ENCODE measurements at regions of chr13 and their contacts with region 1.

Region 1: GRCh38 chr13:95614641-95615245 is 29.8 kb downstream of the DZIP1 start:
- DNase-seq: no peak
- CTCF ChIP-seq: no peak

Region 2: DNA sequence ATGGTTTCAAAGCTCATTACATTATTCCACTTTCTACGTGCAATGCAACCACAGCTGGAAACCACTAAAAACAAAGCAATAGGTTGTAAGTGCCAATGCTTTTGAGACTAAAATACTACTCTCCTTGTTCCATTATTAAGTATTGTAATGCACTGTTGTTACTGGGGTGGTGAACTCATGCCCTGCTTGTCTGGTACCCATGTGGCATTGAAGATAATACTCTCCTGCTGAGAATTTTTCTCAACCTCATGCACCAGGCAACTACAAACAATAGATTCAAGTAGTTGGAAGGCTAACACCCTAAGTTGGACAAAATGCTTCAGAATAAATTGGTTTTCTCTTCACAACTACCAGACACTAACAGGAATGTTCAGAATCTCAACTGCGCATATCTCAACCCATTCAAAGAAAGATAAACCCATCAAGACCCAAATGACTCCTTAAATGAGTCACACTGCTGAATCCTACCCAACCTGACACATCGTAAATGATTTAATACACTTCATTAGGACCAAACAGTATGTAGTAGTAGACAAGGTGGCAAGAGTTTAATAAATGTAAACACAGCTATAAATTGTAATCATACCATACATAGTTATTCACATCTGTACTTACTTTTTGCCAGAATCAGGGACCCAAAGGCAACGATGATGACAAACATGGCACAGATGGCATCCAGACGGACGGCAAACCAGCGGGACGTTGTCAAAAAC is 541.0 kb before region 1 on chr13:
- in situ Hi-C with region 1: no loop called
- DNase-seq: no peak
- CTCF ChIP-seq: no peak

Region 3: GRCh38 chr13:95279016-95279415 is 335.7 kb before region 1 on chr13:
- in situ Hi-C with region 1: no loop called
- DNase-seq: no peak
- CTCF ChIP-seq: no peak

Region 4: DNA sequence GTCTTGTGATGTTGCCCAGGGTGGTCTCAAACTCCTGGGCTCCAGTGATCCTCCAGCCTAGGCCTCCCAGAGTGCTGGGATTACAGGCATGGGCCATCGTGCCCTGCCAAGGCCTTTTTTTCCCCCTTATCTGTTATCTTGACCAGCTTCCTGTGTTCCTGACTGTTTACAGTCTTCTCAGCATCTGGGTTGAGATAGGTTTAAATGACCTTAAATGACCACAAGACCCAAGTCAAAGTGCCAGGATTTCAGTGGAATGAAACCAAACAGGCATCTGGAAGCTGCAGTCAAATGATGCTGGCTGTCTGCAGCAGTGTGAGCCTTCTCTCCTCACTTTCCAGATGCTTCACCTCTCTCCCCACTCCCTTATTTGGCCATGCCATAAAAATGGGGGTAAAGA is 176.4 kb before region 1 on chr13:
- in situ Hi-C with region 1: no loop called
- DNase-seq: no peak
- CTCF ChIP-seq: no peak

Region 5: GRCh38 chr13:95834134-95834765 is 219.5 kb after region 1 on chr13:
- in situ Hi-C with region 1: loop called (anchors 10 kb)
- DNase-seq: peak; percentile 49
- CTCF ChIP-seq: peak; percentile 89

Measured in GM13976 (cell line).